ENCODE measurements at regions of chr17 and their contacts with region 1.

Region 1: DNA sequence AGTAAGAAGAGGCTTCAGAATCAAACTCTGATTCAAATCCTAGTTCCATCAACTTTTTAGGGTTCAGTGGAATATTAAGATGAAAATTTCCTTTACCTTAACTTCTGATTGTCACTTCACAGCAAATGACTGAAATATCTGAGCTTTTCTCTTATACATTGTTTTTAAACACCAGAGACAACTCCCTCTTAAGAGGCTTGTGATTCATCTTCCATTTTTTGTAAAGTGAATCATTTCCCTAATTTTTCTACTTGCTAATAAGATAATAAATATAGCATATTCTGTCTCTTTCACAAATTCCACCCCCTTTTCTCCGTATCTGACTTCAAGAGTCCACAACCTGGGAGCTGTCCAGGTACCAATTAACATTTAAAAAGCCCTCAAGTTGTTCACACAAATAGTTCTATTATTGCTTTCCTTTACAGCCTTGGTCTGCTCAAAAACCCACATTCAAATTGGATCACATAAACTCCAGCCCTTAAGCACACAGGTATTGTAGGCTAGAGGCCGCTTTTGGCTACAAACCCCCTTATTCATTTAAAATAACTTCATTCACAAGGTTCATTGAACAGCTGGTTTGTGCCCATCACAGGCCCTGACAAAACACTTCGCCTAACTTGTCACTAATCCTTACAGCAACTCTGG is 14.1 kb upstream of the UTP6 start:
- DNase-seq: no peak
- H3K4me3 ChIP-seq: no peak overlapping the region
- H3K27ac ChIP-seq: no peak overlapping the region
- H3K4me1 ChIP-seq: peaks cover 0 to 4% (median 0%) of the 10 kb centered on the region in 4 experiments; a peak in 1 of 7 replicates
- H3K27me3 ChIP-seq: no peaks in the 10 kb centered on the region
- CTCF ChIP-seq: no peak
- EP300 ChIP-seq: no peak
- POLR2A ChIP-seq: no peak
- RAD21 ChIP-seq: no peak

Region 2: DNA sequence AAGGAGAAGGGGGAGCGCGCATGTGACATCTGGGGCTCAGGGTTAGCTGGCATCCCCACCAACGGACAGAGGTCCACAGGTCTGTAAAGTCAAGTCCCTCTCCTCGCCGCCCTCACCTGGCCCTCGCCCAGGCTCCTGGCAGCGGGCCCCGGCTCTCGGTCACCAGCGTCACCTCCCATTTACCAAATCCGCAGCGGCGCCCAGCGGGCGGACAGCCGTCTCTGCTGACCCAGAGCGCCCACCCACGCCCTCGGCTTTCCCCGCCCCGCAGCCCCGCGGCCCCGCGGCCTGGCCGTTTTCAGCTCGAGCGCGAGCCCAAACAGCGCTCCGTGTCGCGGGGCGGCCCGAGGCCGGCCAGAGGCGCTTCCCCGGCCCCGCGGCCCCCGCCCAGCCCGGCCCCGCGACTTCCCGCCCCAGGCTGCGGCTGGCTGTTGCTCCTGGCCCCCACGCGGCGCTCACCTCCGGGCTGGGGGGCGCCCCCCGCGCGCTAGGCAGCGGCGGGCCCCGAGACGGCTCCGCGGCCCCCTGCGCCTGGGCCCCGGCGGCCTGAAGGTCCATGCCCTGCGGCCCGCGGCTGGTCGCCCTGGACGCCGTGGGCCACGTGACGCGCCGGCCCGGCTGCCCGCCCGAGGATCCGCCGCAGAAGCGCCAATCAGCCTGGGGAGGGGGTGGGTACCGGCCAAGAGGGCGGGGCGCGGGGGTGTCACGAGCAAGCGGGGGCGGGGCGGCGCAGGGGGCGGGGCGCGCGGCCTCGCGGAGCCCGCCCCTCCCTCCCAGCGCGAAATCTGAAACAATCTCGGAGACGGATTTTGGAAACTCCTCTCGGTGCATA is 56.7 kb before region 1 on chr17 and contains the start of gene COPRS:
- CTCF ChIA-PET with region 1: no interaction called
- POLR2A ChIA-PET with region 1: no interaction called
- DNase-seq: peak; percentile 25 to 82
- H3K4me3 ChIP-seq: peak within 1 kb of the TSS; percentile 61 to 73 (median 66)
- H3K27ac ChIP-seq: no peak within 1 kb of the TSS; the same call in 1 of the 2 replicates
- H3K4me1 ChIP-seq: peaks cover 0 to 10% (median 4%) of the 10 kb centered on the region in 4 experiments; a peak in 6 of 7 replicates
- H3K27me3 ChIP-seq: no peaks in the 10 kb centered on the region
- CTCF ChIP-seq: no peak
- EP300 ChIP-seq: no peak
- POLR2A ChIP-seq: peak in 1 of 2 experiments; percentile 59; a peak in 1 of 3 replicates
- RAD21 ChIP-seq: no peak
- total RNA-seq, gene COPRS: 47.4 and 49.3 TPM in 2 replicates

Region 3: DNA sequence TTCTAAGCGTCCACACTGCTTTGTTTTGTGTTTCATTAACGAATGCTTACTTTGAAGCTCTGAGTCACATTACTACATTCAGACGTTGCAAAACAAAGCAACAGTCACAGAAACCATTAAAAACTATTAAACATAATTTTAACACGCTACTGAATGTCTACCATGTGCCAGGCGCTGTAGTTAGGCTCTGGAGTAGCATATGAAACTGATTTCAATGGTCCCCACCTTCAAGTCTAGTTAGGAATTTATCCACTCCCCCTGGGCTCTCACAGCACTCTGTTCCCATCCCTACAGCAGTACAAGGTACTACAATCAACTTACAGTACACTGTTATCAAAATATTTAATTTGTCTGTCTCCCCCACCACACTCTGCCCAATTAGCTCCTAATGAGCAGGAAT is 14.7 kb before region 1 on chr17:
- CTCF ChIA-PET with region 1: interaction called, 45 read pairs
- POLR2A ChIA-PET with region 1: interaction called, 4 read pairs
- DNase-seq: no peak
- H3K4me3 ChIP-seq: peak overlapping the region; percentile 82 to 99 (median 91)
- H3K27ac ChIP-seq: peak overlapping the region; percentile 53; the same call in 1 of the 2 replicates
- H3K4me1 ChIP-seq: no peaks in the 10 kb centered on the region
- H3K27me3 ChIP-seq: no peaks in the 10 kb centered on the region
- CTCF ChIP-seq: no peak
- EP300 ChIP-seq: no peak
- POLR2A ChIP-seq: no peak
- RAD21 ChIP-seq: no peak

Measured in H1 (cell line).